Activated CD8-positive, alpha-beta T cell treated with anti-CD3 and anti-CD28 coated beads, Interleukin-2, amount 10 ng/mL, durations not matched to agents 7 days and 5 days (primary cell): ENCODE measurements at regions of chr17 and their contacts with region 1.

Region 1: DNA sequence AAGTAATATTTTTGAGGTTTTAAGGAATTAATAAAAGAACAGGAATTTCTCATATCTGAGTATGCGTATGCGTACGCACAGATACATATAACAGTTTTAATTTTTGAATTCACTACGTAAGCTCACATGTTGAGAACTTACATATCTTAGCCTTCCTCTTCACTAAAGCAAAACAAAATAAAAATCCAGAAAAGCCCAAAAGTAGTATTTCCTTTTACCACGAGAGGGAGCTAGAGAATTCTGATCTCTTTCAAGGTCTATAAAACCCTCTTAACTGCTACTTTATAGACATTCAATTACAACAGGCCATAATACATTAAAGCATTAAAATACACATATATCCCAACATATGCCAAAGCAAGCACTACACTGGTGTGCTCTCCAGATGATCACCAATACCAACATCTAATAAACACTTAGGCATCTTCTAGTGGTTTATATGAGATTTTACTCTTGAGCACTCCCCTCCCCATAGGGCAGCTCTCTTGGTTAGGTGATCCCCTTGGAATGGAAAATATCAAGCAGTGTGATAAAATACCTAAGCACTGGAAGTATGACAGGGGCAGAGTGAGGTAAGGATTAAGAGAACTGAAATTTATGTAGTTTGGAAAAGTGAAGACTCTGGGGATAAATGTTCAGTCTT is 94.0 kb downstream of the SKAP1 start:
- DNase-seq: no peak
- ATAC-seq: peak; percentile 47
- H3K4me3 Mint-ChIP-seq: no peak overlapping the region
- H3K27ac Mint-ChIP-seq: no peak overlapping the region
- H3K4me1 Mint-ChIP-seq: peaks cover 5% of the 10 kb centered on the region
- H3K27me3 Mint-ChIP-seq: no peaks in the 10 kb centered on the region

Region 2: GRCh38 chr17:48307814-48308411 is 28.1 kb before region 1 on chr17:
- CTCF ChIA-PET with region 1: interaction called, 14 read pairs
- POLR2A ChIA-PET with region 1: no interaction called
- DNase-seq: peak; percentile 63
- ATAC-seq: peak; percentile 74
- H3K4me3 Mint-ChIP-seq: no peak overlapping the region
- H3K27ac Mint-ChIP-seq: no peak overlapping the region
- H3K4me1 Mint-ChIP-seq: peaks cover 2% of the 10 kb centered on the region
- H3K27me3 Mint-ChIP-seq: no peaks in the 10 kb centered on the region

Region 3: GRCh38 chr17:48322060-48322459 is 13.9 kb before region 1 on chr17:
- CTCF ChIA-PET with region 1: interaction called, 16 read pairs
- POLR2A ChIA-PET with region 1: no interaction called
- DNase-seq: no peak
- ATAC-seq: no peak
- H3K4me3 Mint-ChIP-seq: no peak overlapping the region
- H3K27ac Mint-ChIP-seq: no peak overlapping the region
- H3K4me1 Mint-ChIP-seq: no peaks in the 10 kb centered on the region
- H3K27me3 Mint-ChIP-seq: no peaks in the 10 kb centered on the region

Region 4: GRCh38 chr17:48416971-48417370 is 81.0 kb after region 1 on chr17:
- CTCF ChIA-PET with region 1: no interaction called
- POLR2A ChIA-PET with region 1: no interaction called
- DNase-seq: no peak
- ATAC-seq: peak; percentile 45
- H3K4me3 Mint-ChIP-seq: peak overlapping the region; percentile 19
- H3K27ac Mint-ChIP-seq: peak overlapping the region; percentile 50
- H3K4me1 Mint-ChIP-seq: peaks cover 75% of the 10 kb centered on the region
- H3K27me3 Mint-ChIP-seq: no peaks in the 10 kb centered on the region

Region 5: GRCh38 chr17:48586355-48587258 is 250.6 kb after region 1 on chr17:
- CTCF ChIA-PET with region 1: interaction called, 59 read pairs
- POLR2A ChIA-PET with region 1: no interaction called
- DNase-seq: peak; percentile 49
- ATAC-seq: peak; percentile 27
- H3K4me3 Mint-ChIP-seq: peak overlapping the region; percentile 86
- H3K27ac Mint-ChIP-seq: no peak overlapping the region
- H3K4me1 Mint-ChIP-seq: peaks cover 51% of the 10 kb centered on the region
- H3K27me3 Mint-ChIP-seq: peaks cover 77% of the 10 kb centered on the region